Vagina (tissue), 2 donors: ENCODE measurements at regions of chr13 and their contacts with region 1.

Region 1: DNA sequence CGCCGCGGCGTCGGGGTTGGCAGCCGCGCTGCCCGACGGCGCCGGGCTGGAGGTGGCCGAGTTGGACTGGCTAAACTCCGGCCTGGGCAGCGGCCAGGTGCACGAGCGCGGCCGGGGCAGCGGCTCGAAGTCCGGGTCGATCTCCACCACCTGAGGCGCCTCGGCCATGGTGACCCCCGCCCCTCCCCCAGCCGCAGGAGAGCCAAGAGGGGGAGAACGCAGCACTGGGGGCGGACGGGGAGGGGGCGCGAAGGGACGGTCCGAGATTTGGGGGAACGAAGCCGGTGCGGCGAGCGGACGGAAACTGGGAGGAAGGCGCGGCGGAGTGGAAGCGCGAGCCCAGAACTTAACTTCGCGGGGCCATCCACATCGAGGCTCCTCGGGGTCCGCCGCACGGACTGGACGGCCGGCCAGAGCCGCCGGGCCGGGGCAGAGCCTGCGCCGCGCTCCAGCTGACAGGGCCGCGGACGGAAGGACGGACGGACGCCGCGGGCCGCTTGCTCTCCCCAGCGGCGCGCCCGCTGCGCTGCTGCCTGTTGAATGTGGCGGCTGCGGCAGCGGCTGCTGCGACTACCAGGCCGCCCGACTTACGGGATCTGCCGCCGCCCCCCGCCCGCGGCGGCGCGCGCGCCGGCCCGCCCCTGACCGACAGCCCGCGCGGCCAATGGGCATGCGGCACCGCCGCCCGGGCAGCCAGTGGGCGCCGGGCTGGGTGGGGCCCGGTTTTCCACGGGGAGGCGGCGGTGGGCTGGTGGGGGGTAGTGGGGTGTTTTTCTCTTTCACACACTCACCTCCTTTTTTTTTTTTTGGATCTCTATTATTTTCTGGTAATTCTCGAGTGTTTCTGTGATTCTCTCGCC is at the start of gene FOXO1:
- DNase-seq: peak in 1 of 2 donors; percentile 92
- H3K4me3 ChIP-seq: peak within 1 kb of the TSS; percentile 66 to 78
- H3K27ac ChIP-seq: peak within 1 kb of the TSS; percentile 96
- H3K4me1 ChIP-seq: peaks cover 42% of the 10 kb centered on the region
- H3K27me3 ChIP-seq: no peaks in the 10 kb centered on the region
- CTCF ChIP-seq: no peak
- POLR2A ChIP-seq: peak in 1 of 2 donors; percentile 99
- total RNA-seq, gene FOXO1: 64.1 TPM

Region 2: GRCh38 chr13:40069173-40070044 is 596.9 kb before region 1 on chr13:
- intact Hi-C with region 1: loop called (anchors 10 kb)
- DNase-seq: no peak
- H3K4me3 ChIP-seq: no peak overlapping the region
- H3K27ac ChIP-seq: no peak overlapping the region
- H3K4me1 ChIP-seq: peaks cover 10% of the 10 kb centered on the region
- H3K27me3 ChIP-seq: no peaks in the 10 kb centered on the region
- CTCF ChIP-seq: peak; percentile 66 to 90 (median 75)
- POLR2A ChIP-seq: no peak

Region 3: GRCh38 chr13:40230833-40231266 is 435.4 kb before region 1 on chr13:
- intact Hi-C with region 1: loop called (anchors 10 kb)
- DNase-seq: no peak
- H3K4me3 ChIP-seq: no peak overlapping the region
- H3K27ac ChIP-seq: peak overlapping the region; percentile 65
- H3K4me1 ChIP-seq: peaks cover 51% of the 10 kb centered on the region
- H3K27me3 ChIP-seq: no peaks in the 10 kb centered on the region
- CTCF ChIP-seq: no peak
- POLR2A ChIP-seq: no peak

Region 4: DNA sequence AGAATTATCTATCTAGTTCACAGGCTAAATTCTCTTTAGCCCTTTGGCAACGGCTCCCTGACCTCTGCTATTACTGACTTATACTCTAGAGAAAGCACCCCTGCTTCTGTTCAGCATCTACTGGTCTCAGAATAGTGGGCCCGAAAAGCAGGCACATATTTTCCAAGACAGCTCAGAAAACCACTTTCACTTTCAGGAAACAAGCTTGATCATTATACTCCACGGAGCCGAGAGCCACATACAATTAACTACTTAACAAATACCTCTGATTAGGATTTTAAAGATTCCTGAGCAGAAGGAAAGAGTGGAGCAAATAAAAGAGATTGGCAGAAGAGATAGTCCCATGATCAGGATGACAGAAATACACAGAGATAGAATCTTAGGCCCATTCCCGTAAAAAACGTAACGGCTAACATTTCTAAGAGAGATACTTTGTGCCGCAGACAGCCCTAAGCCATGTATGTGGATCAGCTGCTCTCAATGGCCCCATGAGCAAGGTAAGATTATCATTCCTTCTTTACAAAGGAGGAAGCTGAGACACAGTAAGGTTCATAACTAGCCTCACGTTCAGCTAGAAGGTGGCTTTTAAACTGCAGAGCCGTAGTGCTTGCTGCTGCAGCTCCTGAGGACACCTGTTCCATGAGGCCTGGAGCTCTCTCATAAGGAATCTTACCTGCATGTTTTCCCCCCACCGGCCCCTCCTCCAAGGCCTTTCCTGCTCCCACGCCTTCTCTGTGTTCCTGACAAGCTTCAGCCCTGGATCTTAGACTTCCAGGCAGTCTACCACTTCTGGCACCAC is 227.1 kb before region 1 on chr13:
- intact Hi-C with region 1: loop called (anchors 10 kb)
- DNase-seq: no peak
- H3K4me3 ChIP-seq: peak overlapping the region; percentile 19 to 24
- H3K27ac ChIP-seq: peak overlapping the region; percentile 66
- H3K4me1 ChIP-seq: peaks cover 36% of the 10 kb centered on the region
- H3K27me3 ChIP-seq: no peaks in the 10 kb centered on the region
- CTCF ChIP-seq: no peak
- POLR2A ChIP-seq: no peak

Region 5: GRCh38 chr13:40589285-40590109 is 76.8 kb before region 1 on chr13:
- intact Hi-C with region 1: loop called (anchors 5 kb)
- DNase-seq: no peak
- H3K4me3 ChIP-seq: no peak overlapping the region
- H3K27ac ChIP-seq: peak overlapping the region; percentile 22
- H3K4me1 ChIP-seq: peaks cover 60% of the 10 kb centered on the region
- H3K27me3 ChIP-seq: no peaks in the 10 kb centered on the region
- CTCF ChIP-seq: no peak
- POLR2A ChIP-seq: no peak

Region 6: DNA sequence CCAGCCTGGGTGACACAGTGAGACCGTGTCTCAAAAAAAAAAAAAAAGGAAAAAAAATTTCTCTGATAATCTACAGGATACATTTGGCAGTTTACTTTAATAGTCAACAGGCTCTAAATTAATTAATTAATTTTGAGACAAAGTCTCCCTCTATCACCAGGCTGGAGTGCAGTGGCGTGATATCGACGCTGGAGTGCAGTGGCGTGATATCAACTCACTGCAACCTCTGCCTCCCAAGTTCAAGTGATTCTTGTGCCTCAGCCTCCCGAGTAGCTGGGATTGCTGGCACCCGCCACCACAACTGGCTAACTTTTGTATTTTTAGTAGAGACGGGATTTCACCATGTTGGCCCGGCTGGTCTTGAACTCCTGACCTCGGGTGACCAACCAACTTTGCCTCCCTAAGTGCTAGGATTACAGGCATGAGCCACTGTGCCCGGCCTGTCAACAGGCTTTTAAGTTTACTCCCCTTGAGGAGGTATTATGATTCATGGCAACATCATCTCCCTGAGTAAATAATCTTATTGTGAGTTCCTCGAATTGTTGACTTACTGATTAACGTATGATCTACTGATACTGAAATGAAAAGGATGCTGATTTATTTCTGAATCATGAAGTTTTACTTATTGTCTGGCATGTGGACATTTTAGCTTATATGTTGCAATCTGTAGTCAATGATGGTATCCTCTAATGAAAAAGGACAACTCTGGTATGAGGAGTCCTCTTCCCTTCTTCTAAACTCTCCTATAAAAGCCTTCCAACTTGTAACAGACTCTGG is 618.4 kb after region 1 on chr13:
- intact Hi-C with region 1: no loop called
- DNase-seq: no peak
- H3K4me3 ChIP-seq: no peak overlapping the region
- H3K27ac ChIP-seq: no peak overlapping the region
- H3K4me1 ChIP-seq: peaks cover 7% of the 10 kb centered on the region
- H3K27me3 ChIP-seq: no peaks in the 10 kb centered on the region
- CTCF ChIP-seq: no peak
- POLR2A ChIP-seq: no peak